ENCODE measurements at regions of chr1 and their contacts with region 1.

Region 1: GRCh38 chr1:46442317-46443161 is 47.1 kb upstream of the DMBX1 start:
- DNase-seq: peak; percentile 79
- CTCF ChIP-seq: peak; percentile 77

Region 2: GRCh38 chr1:46527474-46528296 is 85.1 kb after region 1 on chr1:
- in situ Hi-C with region 1: loop called (anchors 10 kb)
- DNase-seq: peak; percentile 91
- CTCF ChIP-seq: peak; percentile 95

Measured in GM13977 (cell line).